Motor neuron (in vitro differentiated cells): ENCODE measurements at regions of chr16 and their contacts with region 1.

Region 1: DNA sequence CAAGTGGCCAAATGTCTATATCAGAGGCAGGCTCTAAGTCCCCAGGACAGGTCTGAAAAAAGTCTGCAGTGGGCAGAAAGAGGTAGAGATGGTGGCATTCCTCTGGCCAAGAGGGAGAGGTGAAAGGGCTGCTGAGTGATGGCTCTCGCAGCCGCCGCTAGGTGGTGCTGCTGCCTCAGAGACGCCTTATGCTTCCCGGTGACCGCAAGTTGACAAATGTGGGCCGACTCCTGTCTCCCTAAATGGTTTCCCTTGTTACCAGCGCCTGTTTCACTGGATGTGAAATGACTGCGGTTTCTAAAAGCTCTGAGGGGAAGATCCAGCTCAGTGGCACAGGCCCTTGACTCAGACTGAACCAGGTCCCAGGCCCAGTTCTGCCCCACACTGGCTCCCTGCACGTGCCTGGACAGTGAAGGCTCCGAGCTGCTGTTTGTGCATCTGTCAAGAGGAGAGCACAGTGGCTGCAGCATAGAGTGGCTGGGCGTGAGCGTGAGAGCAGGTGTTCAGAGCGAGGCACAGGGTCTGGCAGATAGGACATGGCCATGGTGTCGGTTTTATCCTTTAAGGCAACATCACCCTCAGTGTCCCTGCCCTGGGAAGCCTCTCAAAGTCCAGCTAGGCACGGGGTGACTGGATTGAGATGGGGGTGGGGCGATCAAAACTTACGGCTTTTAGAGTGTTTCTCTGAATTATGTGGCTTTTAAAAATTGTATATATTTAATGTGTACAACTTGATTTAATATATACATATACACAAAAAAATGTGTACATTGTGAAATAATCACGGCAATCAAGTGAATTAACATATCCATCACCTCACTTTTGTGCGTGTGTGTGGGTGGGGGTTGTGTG is 19.9 kb downstream of the CLEC16A start:
- ATAC-seq: peak; percentile 92 to 99 (median 96)
- H3K4me3 ChIP-seq: no peak overlapping the region
- H3K27ac ChIP-seq: no peak overlapping the region
- H3K4me1 ChIP-seq: peaks cover 3 to 4% of the 10 kb centered on the region in 2 donors

Region 2: GRCh38 chr16:11255737-11256660 is 291.7 kb after region 1 on chr16 and contains the start of gene SOCS1:
- in situ Hi-C with region 1: loop called (anchors 10 to 25 kb)
- ATAC-seq: peak; percentile 53 to 84 (median 78)
- H3K4me3 ChIP-seq: peak within 1 kb of the TSS; percentile 70 to 92 (median 75)
- H3K27ac ChIP-seq: peak within 1 kb of the TSS; percentile 68 to 75
- H3K4me1 ChIP-seq: peaks cover 2 to 6% of the 10 kb centered on the region in 2 donors
- total RNA-seq, gene SOCS1: 0.92 to 42.1 (median 3.5) TPM

Region 3: DNA sequence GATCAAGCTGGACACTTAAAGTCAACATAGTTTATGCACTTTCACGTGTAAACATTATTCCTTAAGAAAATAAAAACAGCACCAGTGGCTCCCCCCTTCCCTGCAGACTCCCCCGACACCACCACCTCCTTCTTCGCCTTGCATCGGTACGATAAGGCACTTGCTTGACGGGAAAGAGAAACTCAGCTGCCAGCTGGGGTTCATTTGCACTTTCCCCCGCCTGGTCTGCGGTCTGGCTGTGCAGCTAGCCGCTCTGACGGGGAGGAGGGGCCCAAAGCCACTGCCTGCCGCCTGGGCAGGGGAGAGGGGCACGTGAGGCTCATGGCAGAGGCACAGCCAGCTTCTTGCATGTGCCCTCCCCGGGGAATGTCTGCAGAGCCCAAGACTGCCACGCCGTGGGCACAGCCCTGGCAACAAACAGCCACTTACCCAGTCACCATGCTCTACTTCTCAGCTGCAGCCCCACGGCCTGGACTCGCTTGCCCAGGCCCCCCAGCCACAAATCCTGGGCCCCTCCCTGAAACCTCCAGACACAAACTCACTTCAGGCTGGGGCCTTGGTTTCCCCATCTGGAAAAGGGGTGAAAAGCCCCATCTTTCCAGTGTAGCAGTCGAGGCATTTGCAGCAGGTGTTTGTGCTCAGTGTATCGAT is 333.4 kb after region 1 on chr16:
- in situ Hi-C with region 1: no loop called
- ATAC-seq: peak; percentile 87 to 98 (median 96)
- H3K4me3 ChIP-seq: no peak overlapping the region
- H3K27ac ChIP-seq: no peak overlapping the region
- H3K4me1 ChIP-seq: peaks cover 4 to 11% of the 10 kb centered on the region in 2 donors

Region 4: GRCh38 chr16:11356573-11357331 is 392.5 kb after region 1 on chr16:
- in situ Hi-C with region 1: loop called in 6 of 9 experiments (anchors 25 kb)
- ATAC-seq: peak; percentile 25 to 94 (median 78)
- H3K4me3 ChIP-seq: no peak overlapping the region
- H3K27ac ChIP-seq: no peak overlapping the region
- H3K4me1 ChIP-seq: no peaks in the 10 kb centered on the region

Region 5: DNA sequence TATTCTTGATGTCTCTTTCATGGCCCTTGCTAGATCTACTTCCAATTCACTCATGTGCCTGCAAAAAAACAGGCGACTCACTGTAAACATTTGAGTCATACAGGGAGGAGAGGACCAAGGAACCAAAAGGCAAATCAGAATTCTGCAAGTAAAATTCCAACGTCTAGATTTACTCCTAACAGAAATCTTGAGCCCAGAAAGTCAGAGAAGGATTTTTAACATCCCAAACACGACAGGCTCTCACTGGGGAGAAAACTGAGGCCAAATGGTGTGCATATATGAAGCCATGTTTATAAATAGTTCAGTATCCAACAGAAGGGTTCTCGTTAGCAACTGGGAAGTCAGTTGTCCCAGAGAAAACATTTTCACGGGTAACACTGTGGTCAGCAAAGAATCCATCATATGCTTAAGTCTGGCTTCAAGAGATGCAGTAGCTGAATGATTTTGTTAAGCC is 582.4 kb after region 1 on chr16:
- in situ Hi-C with region 1: loop called in 1 of 9 experiments (anchors 25 kb)
- ATAC-seq: peak in 7 of 8 experiments; percentile 29 to 90 (median 43)
- H3K4me3 ChIP-seq: no peak overlapping the region
- H3K27ac ChIP-seq: peak overlapping the region; percentile 3 to 8
- H3K4me1 ChIP-seq: peaks cover 20 to 23% of the 10 kb centered on the region in 2 donors

Region 6: GRCh38 chr16:11715246-11715947 is 751.1 kb after region 1 on chr16:
- in situ Hi-C with region 1: loop called in 1 of 9 experiments (anchors 10 kb)
- ATAC-seq: no peak
- H3K4me3 ChIP-seq: no peak overlapping the region
- H3K27ac ChIP-seq: no peak overlapping the region
- H3K4me1 ChIP-seq: no peaks in the 10 kb centered on the region